Left cardiac atrium (tissue), 4 donors: ENCODE measurements at regions of chr6 and their contacts with region 1.

Region 1: GRCh38 chr6:158697811-158698210 is 48.0 kb downstream of the SYTL3 start:
- DNase-seq: no peak
- ATAC-seq: peak in 1 of 2 donors; percentile 49

Region 2: GRCh38 chr6:158634695-158635426 is 63.0 kb before region 1 on chr6:
- intact Hi-C with region 1: loop called in 1 of 2 experiments (anchors 5 kb)
- DNase-seq: no peak
- ATAC-seq: no peak

Region 3: GRCh38 chr6:158769771-158770432 is 72.1 kb after region 1 on chr6:
- intact Hi-C with region 1: no loop called
- DNase-seq: peak; percentile 65
- ATAC-seq: peak; percentile 27 to 48

Region 4: GRCh38 chr6:158780988-158781708 is 83.3 kb after region 1 on chr6:
- intact Hi-C with region 1: no loop called
- DNase-seq: no peak
- ATAC-seq: no peak